ENCODE measurements at regions of chr19 and their contacts with region 1.

Region 1: GRCh38 chr19:47514869-47515588 is at the start of gene NAPA:
- DNase-seq: peak; percentile 100
- H3K4me3 Mint-ChIP-seq: peak within 1 kb of the TSS; percentile 98
- H3K27ac Mint-ChIP-seq: peak within 1 kb of the TSS; percentile 89
- H3K4me1 Mint-ChIP-seq: peaks cover 27% of the 10 kb centered on the region
- H3K27me3 Mint-ChIP-seq: no peaks in the 10 kb centered on the region
- CTCF ChIP-seq: peak; percentile 96
- total RNA-seq, gene NAPA: 158 and 181 TPM in 2 replicates

Region 2: GRCh38 chr19:47540728-47541127 is 25.7 kb after region 1 on chr19:
- CTCF ChIA-PET with region 1: no interaction called
- intact Hi-C with region 1: no loop called
- DNase-seq: no peak
- H3K4me3 Mint-ChIP-seq: no peak overlapping the region
- H3K27ac Mint-ChIP-seq: no peak overlapping the region
- H3K4me1 Mint-ChIP-seq: no peaks in the 10 kb centered on the region
- H3K27me3 Mint-ChIP-seq: peaks cover 29% of the 10 kb centered on the region
- CTCF ChIP-seq: no peak

Region 3: GRCh38 chr19:47608074-47608918 is 93.3 kb after region 1 on chr19:
- CTCF ChIA-PET with region 1: interaction called, 6 read pairs
- intact Hi-C with region 1: loop called (anchors 5 kb)
- DNase-seq: peak; percentile 99
- H3K4me3 Mint-ChIP-seq: peak overlapping the region; percentile 88
- H3K27ac Mint-ChIP-seq: peak overlapping the region; percentile 70
- H3K4me1 Mint-ChIP-seq: peaks cover 18% of the 10 kb centered on the region
- H3K27me3 Mint-ChIP-seq: peaks cover 11% of the 10 kb centered on the region
- CTCF ChIP-seq: no peak

Region 4: GRCh38 chr19:47697863-47698609 is 183.0 kb after region 1 on chr19:
- CTCF ChIA-PET with region 1: interaction called, 4 read pairs
- intact Hi-C with region 1: loop called (anchors 1 kb)
- DNase-seq: peak; percentile 88
- H3K4me3 Mint-ChIP-seq: no peak overlapping the region
- H3K27ac Mint-ChIP-seq: no peak overlapping the region
- H3K4me1 Mint-ChIP-seq: no peaks in the 10 kb centered on the region
- H3K27me3 Mint-ChIP-seq: no peaks in the 10 kb centered on the region
- CTCF ChIP-seq: peak; percentile 99